ENCODE measurements at regions of chr7 and their contacts with region 1.

Region 1: GRCh38 chr7:56074371-56074791 is 10.3 kb downstream of the SUMF2 start:
- DNase-seq: peak; percentile 50 to 71 (median 56)
- H3K4me3 ChIP-seq: no peak overlapping the region
- H3K4me3 Mint-ChIP-seq: no peak overlapping the region
- H3K27ac ChIP-seq: no peak overlapping the region
- H3K27ac Mint-ChIP-seq: peak overlapping the region in 6 of 7 donors; percentile 6 to 86 (median 72)
- H3K4me1 ChIP-seq: no peaks in the 10 kb centered on the region
- H3K4me1 Mint-ChIP-seq: peaks cover 3 to 6% (median 6%) of the 10 kb centered on the region in 4 donors
- H3K27me3 ChIP-seq: no peaks in the 10 kb centered on the region
- H3K27me3 Mint-ChIP-seq: no peaks in the 10 kb centered on the region

Region 2: DNA sequence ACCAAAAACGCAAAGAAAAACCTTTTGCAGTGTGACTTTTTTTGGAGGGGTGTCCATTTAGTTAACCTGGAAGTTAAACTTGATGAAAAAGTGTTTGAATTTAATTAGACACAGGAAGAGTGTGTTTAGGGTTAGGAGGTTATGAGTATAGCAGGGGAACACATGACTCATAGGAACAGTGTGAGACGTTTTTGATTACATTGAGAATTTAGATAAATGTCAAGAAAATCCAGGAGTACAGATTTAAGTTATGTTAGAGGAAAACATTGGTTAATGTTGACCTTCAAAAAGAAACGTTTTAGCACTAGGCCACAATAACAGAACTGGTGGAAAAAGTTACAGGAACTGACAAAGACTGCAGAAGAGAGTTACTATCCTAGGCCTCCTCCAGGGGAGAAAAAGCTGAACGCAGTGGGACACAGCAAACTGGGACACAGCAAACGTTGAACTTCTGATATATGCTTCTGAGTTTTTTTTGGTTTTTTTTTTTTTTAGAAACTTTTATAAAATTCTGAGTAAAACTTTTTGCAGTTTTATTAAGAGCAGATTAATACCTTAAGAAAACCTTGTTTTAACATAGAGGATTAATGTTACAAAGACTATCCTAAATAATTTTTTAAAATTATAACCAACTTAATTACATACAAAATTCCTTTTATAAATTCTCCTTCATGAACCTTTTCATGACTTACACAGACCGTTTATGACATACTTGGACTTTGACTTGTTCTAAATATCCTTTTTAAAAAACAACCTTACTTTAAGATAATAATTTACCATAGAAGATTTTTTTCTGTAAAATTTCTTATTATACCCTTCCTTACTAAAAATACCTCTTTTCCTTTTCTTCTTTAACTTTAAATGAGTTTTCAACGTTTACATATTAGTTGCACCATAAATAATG is 687.1 kb before region 1 on chr7:
- CTCF ChIA-PET with region 1: no interaction called
- POLR2A ChIA-PET with region 1: no interaction called
- intact Hi-C with region 1: no loop called
- DNase-seq: no peak
- H3K4me3 ChIP-seq: no peak overlapping the region
- H3K4me3 Mint-ChIP-seq: no peak overlapping the region
- H3K27ac ChIP-seq: no peak overlapping the region
- H3K27ac Mint-ChIP-seq: no peak overlapping the region
- H3K4me1 ChIP-seq: no peaks in the 10 kb centered on the region
- H3K4me1 Mint-ChIP-seq: peaks cover 0 to 2% (median under 1%) of the 10 kb centered on the region in 4 donors
- H3K27me3 ChIP-seq: no peaks in the 10 kb centered on the region
- H3K27me3 Mint-ChIP-seq: no peaks in the 10 kb centered on the region

Region 3: DNA sequence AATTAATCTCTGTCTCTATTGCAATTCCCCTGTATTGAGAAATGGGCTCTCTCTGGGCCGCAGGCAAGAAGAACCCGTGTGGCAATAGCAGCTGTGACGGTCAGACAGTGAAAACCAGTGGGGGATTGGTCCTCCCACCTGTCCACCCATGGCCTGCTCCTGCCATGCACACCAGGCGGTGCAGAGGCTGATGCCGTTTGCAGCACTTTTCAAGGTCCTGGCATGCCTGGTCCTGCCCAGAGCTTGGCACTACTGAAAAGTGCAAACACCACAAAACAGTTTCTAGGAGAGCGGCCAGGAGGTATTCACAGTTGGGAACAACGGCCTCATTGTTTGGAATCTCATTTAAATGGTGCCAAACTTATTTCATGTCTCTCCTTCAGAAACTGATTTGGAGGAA is 64.7 kb before region 1 on chr7:
- CTCF ChIA-PET with region 1: interaction called, 240 read pairs
- POLR2A ChIA-PET with region 1: no interaction called
- intact Hi-C with region 1: loop called (anchors 1 kb)
- DNase-seq: no peak
- H3K4me3 ChIP-seq: no peak overlapping the region
- H3K4me3 Mint-ChIP-seq: no peak overlapping the region
- H3K27ac ChIP-seq: no peak overlapping the region
- H3K27ac Mint-ChIP-seq: peak overlapping the region in 1 of 7 donors; percentile 12
- H3K4me1 ChIP-seq: no peaks in the 10 kb centered on the region
- H3K4me1 Mint-ChIP-seq: no peaks in the 10 kb centered on the region
- H3K27me3 ChIP-seq: no peaks in the 10 kb centered on the region
- H3K27me3 Mint-ChIP-seq: no peaks in the 10 kb centered on the region

Region 4: GRCh38 chr7:56063882-56064625 is 10.3 kb before region 1 on chr7 and contains the start of gene SUMF2:
- CTCF ChIA-PET with region 1: interaction called, 40 read pairs
- POLR2A ChIA-PET with region 1: interaction called, 22 read pairs
- intact Hi-C with region 1: no loop called
- DNase-seq: peak; percentile 88 to 95 (median 92)
- H3K4me3 ChIP-seq: peak within 1 kb of the TSS; percentile 81 to 97
- H3K4me3 Mint-ChIP-seq: peak within 1 kb of the TSS; percentile 89 to 95 (median 94)
- H3K27ac ChIP-seq: peak within 1 kb of the TSS; percentile 72
- H3K27ac Mint-ChIP-seq: peak within 1 kb of the TSS; percentile 90 to 98 (median 95)
- H3K4me1 ChIP-seq: peaks cover 22% of the 10 kb centered on the region
- H3K4me1 Mint-ChIP-seq: peaks cover 21 to 38% (median 28%) of the 10 kb centered on the region in 4 donors
- H3K27me3 ChIP-seq: no peaks in the 10 kb centered on the region
- H3K27me3 Mint-ChIP-seq: no peaks in the 10 kb centered on the region
- total RNA-seq, gene SUMF2: 172 to 177 TPM

Region 5: GRCh38 chr7:56256108-56256507 is 181.7 kb after region 1 on chr7:
- CTCF ChIA-PET with region 1: no interaction called
- POLR2A ChIA-PET with region 1: no interaction called
- intact Hi-C with region 1: no loop called
- DNase-seq: no peak
- H3K4me3 ChIP-seq: no peak overlapping the region
- H3K4me3 Mint-ChIP-seq: no peak overlapping the region
- H3K27ac ChIP-seq: no peak overlapping the region
- H3K27ac Mint-ChIP-seq: no peak overlapping the region
- H3K4me1 ChIP-seq: no peaks in the 10 kb centered on the region
- H3K4me1 Mint-ChIP-seq: peaks cover 0 to 2% (median 0%) of the 10 kb centered on the region in 4 donors
- H3K27me3 ChIP-seq: no peaks in the 10 kb centered on the region
- H3K27me3 Mint-ChIP-seq: no peaks in the 10 kb centered on the region

Measured in CD4-positive, alpha-beta memory T cell (primary cell).